ENCODE measurements at regions of chr1 and their contacts with region 1.

Region 1: GRCh38 chr1:110209715-110210603 is at the start of gene KCNC4:
- DNase-seq: peak; percentile 81
- H3K4me3 ChIP-seq: peak within 1 kb of the TSS; percentile 43 to 65 (median 61)
- H3K27ac ChIP-seq: no peak within 1 kb of the TSS
- H3K4me1 ChIP-seq: peaks cover 5% of the 10 kb centered on the region
- H3K27me3 ChIP-seq: peaks cover 0 to 6% of the 10 kb centered on the region in 2 experiments
- CTCF ChIP-seq: no peak
- POLR2A ChIP-seq: no peak
- total RNA-seq, gene KCNC4: 12.3 and 22.5 TPM in 2 replicates

Region 2: DNA sequence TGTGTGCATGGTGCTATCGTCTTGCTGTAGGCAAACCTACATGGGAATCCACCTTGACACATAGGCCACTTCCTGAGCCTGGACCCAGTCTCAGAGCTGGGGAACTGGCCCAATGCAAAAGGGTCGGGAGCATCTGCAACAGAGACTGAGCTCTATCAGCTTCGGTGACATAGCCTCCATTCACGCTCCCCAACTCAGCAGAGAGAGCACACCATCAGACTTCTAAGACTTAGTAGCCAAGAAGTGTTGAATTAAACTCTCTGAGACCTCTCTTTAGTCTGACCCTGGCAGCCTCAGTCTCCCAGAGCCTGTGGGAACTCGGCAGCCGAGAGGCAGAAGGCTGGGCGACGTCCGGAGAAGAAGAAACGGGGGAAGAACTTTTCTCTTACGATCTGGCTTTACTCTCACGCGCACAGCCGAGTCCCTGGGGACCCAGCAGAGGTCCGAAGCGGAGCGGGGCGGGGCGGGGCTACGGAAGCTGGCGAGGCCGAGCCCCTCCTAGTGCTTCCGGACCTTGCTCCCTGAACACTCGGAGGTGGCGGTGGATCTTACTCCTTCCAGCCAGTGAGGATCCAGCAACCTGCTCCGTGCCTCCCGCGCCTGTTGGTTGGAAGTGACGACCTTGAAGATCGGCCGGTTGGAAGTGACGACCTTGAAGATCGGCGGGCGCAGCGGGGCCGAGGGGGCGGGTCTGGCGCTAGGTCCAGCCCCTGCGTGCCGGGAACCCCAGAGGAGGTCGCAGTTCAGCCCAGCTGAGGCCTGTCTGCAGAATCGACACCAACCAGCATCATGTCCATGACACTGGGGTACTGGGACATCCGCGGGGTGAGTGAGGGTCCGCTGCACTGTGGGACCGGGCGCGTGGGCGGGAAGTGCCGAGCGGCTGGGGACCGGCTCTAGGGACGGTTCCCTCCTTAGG is 554.1 kb before region 1 on chr1 and contains the start of gene GSTM4:
- CTCF ChIA-PET with region 1: no interaction called
- POLR2A ChIA-PET with region 1: no interaction called
- dilution Hi-C with region 1: no loop called
- intact Hi-C with region 1: no loop called
- DNase-seq: peak; percentile 69
- H3K4me3 ChIP-seq: peak within 1 kb of the TSS; percentile 57 to 68 (median 59)
- H3K27ac ChIP-seq: no peak within 1 kb of the TSS
- H3K4me1 ChIP-seq: peaks cover 9% of the 10 kb centered on the region
- H3K27me3 ChIP-seq: peaks cover 13 to 16% of the 10 kb centered on the region in 2 experiments
- CTCF ChIP-seq: no peak
- POLR2A ChIP-seq: no peak
- total RNA-seq, gene GSTM4: 5.5 and 9.5 TPM in 2 replicates

Region 3: GRCh38 chr1:110243574-110243973 is 33.6 kb after region 1 on chr1:
- CTCF ChIA-PET with region 1: interaction called, 21 read pairs
- POLR2A ChIA-PET with region 1: no interaction called
- dilution Hi-C with region 1: no loop called
- intact Hi-C with region 1: no loop called
- DNase-seq: no peak
- H3K4me3 ChIP-seq: no peak overlapping the region
- H3K27ac ChIP-seq: no peak overlapping the region
- H3K4me1 ChIP-seq: peaks cover 19% of the 10 kb centered on the region
- H3K27me3 ChIP-seq: no peaks in the 10 kb centered on the region
- CTCF ChIP-seq: no peak
- POLR2A ChIP-seq: no peak

Region 4: GRCh38 chr1:110292031-110292741 is 82.2 kb after region 1 on chr1:
- CTCF ChIA-PET with region 1: interaction called, 1,577 read pairs
- POLR2A ChIA-PET with region 1: no interaction called
- dilution Hi-C with region 1: no loop called
- intact Hi-C with region 1: no loop called
- DNase-seq: peak; percentile 12
- H3K4me3 ChIP-seq: no peak overlapping the region
- H3K27ac ChIP-seq: no peak overlapping the region
- H3K4me1 ChIP-seq: no peaks in the 10 kb centered on the region
- H3K27me3 ChIP-seq: peaks cover 5 to 9% of the 10 kb centered on the region in 2 experiments
- CTCF ChIP-seq: no peak
- POLR2A ChIP-seq: no peak

Region 5: GRCh38 chr1:110338886-110339406 is 129.0 kb after region 1 on chr1 and contains the start of gene RBM15:
- CTCF ChIA-PET with region 1: interaction called, 80 read pairs
- POLR2A ChIA-PET with region 1: no interaction called
- dilution Hi-C with region 1: no loop called
- intact Hi-C with region 1: loop called (anchors 1 kb)
- DNase-seq: peak; percentile 100
- H3K4me3 ChIP-seq: peak within 1 kb of the TSS; percentile 83 to 91 (median 84)
- H3K27ac ChIP-seq: peak within 1 kb of the TSS; percentile 88
- H3K4me1 ChIP-seq: peaks cover 37% of the 10 kb centered on the region
- H3K27me3 ChIP-seq: no peaks in the 10 kb centered on the region
- CTCF ChIP-seq: no peak
- POLR2A ChIP-seq: no peak
- total RNA-seq, gene RBM15: 26.9 and 29.5 TPM in 2 replicates

Region 6: GRCh38 chr1:110433803-110434202 is 223.8 kb after region 1 on chr1:
- CTCF ChIA-PET with region 1: interaction called, 11 read pairs
- POLR2A ChIA-PET with region 1: no interaction called
- dilution Hi-C with region 1: no loop called
- intact Hi-C with region 1: no loop called
- DNase-seq: no peak
- H3K4me3 ChIP-seq: no peak overlapping the region
- H3K27ac ChIP-seq: no peak overlapping the region
- H3K4me1 ChIP-seq: no peaks in the 10 kb centered on the region
- H3K27me3 ChIP-seq: peaks cover 9 to 16% of the 10 kb centered on the region in 2 experiments
- CTCF ChIP-seq: no peak
- POLR2A ChIP-seq: no peak